Heart right ventricle (tissue), 16 donors: ENCODE measurements at regions of chr2 and their contacts with region 1.

Region 1: DNA sequence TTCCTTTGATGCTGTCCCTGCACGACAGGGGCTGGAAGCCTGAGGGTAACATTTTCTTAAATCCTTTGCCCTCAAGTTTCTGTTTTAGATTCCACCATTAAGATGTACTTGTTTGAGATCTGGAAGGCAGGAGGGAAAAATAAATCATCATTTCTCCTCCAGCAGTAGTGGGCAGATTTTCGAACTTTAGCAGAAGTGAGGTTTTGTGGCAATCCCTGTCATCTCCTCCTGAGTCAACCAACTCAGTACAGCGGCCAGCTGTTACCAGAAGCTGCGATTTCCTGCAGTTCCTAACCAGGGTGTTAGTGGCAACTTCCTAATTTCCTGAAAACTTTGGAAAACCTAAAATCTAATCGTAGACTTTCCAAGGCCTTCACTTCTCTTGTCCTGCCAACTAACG is 517.2 kb upstream of the ACVR2A start:
- DNase-seq: no peak
- ATAC-seq: no peak
- H3K4me3 ChIP-seq: no peak overlapping the region
- H3K27ac ChIP-seq: peak overlapping the region in 1 of 10 donors; percentile 11
- H3K4me1 ChIP-seq: peaks cover 0 to 12% (median 0%) of the 10 kb centered on the region in 9 donors
- H3K27me3 ChIP-seq: no peaks in the 10 kb centered on the region
- CTCF ChIP-seq: no peak

Region 2: DNA sequence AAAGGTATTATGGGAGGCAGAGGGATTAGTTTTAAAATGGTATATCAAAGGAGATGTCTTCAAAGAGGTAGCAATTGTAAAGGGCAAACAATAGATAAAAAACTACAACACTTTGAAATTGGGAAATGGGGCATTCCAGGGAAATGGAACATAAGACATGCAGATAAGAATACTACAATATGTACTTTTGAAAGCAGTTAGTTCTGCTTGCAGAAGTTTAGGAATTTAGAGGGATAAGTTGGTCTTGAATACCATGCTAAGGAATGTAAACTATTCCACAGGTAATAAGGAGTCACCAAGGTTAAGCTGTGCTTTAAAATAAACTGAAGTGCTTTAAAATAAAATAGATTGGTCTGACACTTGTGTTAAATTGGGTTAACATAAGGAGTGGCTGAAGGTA is 54.5 kb before region 1 on chr2:
- intact Hi-C with region 1: loop called in 1 of 10 experiments (anchors 2 kb)
- DNase-seq: no peak
- ATAC-seq: no peak
- H3K4me3 ChIP-seq: no peak overlapping the region
- H3K27ac ChIP-seq: no peak overlapping the region
- H3K4me1 ChIP-seq: no peaks in the 10 kb centered on the region
- H3K27me3 ChIP-seq: no peaks in the 10 kb centered on the region
- CTCF ChIP-seq: no peak